H1 (cell line): ENCODE measurements at regions of chr3 and their contacts with region 1.

Region 1: DNA sequence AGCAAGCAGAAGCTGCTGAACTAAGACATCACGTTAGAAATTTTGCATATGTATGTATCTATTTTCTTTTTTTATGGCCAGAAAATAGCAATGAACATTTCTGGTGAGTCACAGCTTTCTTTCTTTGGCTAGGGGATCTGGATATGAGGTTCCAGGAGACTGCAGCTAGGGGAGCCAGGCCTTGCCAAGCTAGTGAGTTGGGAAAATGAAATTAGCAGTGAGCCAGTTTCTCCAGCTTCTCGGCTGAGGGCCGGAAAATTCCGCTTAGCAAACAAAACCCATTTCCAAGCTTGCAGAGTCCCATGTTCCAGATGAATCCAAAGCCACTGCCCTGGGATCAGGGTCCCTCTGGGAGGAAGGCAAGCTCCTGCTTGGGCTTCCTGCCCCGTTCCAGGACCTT is 137.6 kb downstream of the SRGAP3 start:
- DNase-seq: no peak
- H3K4me3 ChIP-seq: no peak overlapping the region
- H3K27ac ChIP-seq: no peak overlapping the region
- H3K4me1 ChIP-seq: peaks cover 0 to 2% (median 0%) of the 10 kb centered on the region in 4 experiments; a peak in 3 of 7 replicates
- H3K27me3 ChIP-seq: no peaks in the 10 kb centered on the region
- CTCF ChIP-seq: no peak
- EP300 ChIP-seq: no peak
- POLR2A ChIP-seq: no peak
- RAD21 ChIP-seq: no peak

Region 2: DNA sequence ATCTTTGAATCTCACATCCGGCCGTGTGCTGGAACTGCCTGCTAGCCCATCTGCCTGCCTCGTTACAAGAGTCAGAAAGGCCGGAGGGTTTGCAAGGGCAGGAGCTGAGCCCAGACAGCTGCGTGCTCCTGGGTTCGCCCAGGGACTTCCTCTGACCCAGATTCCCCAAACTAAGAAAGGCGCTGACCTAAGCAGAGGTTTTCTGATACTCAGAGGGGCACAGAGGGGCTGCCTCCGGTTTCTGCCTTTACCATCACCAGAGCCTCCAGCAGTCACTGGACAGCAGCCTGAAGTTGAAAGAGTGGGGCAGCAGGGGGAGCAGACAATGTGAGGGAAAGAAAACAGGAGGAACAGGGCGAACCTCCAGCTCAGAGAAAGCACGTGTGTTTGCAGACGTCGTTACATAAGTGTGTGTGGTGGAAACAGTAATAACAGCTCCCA is 115.2 kb before region 1 on chr3:
- CTCF ChIA-PET with region 1: interaction called, 13 read pairs
- POLR2A ChIA-PET with region 1: no interaction called
- DNase-seq: no peak
- H3K4me3 ChIP-seq: no peak overlapping the region
- H3K27ac ChIP-seq: no peak overlapping the region
- H3K4me1 ChIP-seq: peaks cover 0 to 5% (median 4%) of the 10 kb centered on the region in 4 experiments; a peak in 3 of 7 replicates
- H3K27me3 ChIP-seq: no peaks in the 10 kb centered on the region
- CTCF ChIP-seq: peak; percentile 44 to 57 (median 54)
- EP300 ChIP-seq: no peak
- POLR2A ChIP-seq: no peak
- RAD21 ChIP-seq: peak; percentile 35 to 61

Region 3: DNA sequence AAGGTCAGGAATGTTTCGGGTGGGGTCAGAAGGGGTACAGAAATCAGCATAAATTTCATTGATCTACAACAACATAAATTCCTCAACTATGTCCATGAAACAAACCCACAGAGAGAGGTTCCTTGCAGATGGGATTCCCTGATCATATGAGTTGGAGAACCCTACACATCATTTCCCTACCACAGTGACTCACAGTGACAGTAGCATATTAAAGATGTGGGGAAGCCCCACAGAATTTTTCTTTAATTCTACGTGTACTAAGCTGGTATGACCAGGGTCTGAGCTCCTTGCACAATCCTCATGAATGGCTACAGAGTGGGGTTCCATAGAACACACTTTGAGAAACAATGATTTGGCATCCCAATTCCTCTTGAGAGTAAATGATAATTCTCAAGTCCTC is 31.7 kb before region 1 on chr3:
- CTCF ChIA-PET with region 1: interaction called, 20 read pairs
- POLR2A ChIA-PET with region 1: no interaction called
- DNase-seq: no peak
- H3K4me3 ChIP-seq: no peak overlapping the region
- H3K27ac ChIP-seq: no peak overlapping the region
- H3K4me1 ChIP-seq: peaks cover 7 to 21% (median 17%) of the 10 kb centered on the region in 4 experiments
- H3K27me3 ChIP-seq: no peaks in the 10 kb centered on the region
- CTCF ChIP-seq: no peak
- EP300 ChIP-seq: no peak
- POLR2A ChIP-seq: no peak
- RAD21 ChIP-seq: no peak

Region 4: DNA sequence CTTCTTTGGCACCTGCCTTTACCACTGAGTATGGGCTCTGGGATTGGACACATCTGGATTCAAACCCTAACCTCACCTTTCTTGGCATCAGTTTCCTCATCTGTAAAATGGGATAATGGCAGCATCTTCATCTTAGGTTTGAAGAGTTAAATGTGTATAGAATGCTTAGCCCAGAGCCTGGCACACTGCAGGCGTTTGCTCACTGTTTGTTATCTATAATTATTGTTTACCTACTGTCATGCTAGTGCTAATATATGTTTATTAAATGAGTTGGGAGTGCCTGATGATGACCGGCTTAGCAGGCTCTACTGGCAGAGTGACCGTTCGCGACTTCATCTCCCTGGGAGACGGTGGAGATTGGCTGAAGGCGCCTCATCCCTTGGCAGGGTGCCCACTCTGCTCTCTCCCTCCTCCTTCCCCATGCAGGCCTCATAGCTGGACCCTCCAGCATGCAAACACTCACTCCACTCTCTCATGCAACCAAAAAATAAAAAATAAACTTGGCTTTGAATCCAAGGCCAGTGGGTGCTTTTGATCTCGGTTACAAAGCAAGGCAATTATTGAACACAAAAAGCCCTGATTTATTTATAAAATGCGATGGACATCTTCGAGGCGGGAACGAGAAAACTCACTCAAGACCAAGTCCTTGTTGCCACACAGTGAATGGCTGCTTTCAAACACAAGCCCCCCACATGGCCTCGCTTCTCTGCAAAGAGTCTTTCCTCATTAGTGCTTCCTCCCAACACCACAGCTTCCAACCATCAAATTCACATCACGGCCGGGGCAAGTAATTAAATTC is 13.1 kb before region 1 on chr3:
- CTCF ChIA-PET with region 1: interaction called, 39 read pairs
- POLR2A ChIA-PET with region 1: interaction called, 10 read pairs
- DNase-seq: no peak
- H3K4me3 ChIP-seq: no peak overlapping the region
- H3K27ac ChIP-seq: no peak overlapping the region
- H3K4me1 ChIP-seq: peaks cover 4 to 22% (median 18%) of the 10 kb centered on the region in 4 experiments; a peak in 5 of 7 replicates
- H3K27me3 ChIP-seq: no peaks in the 10 kb centered on the region
- CTCF ChIP-seq: no peak
- EP300 ChIP-seq: no peak
- POLR2A ChIP-seq: no peak
- RAD21 ChIP-seq: no peak

Region 5: GRCh38 chr3:9129365-9129764 is 17.5 kb after region 1 on chr3:
- CTCF ChIA-PET with region 1: interaction called, 79 read pairs
- POLR2A ChIA-PET with region 1: interaction called, 3 read pairs
- DNase-seq: no peak
- H3K4me3 ChIP-seq: no peak overlapping the region
- H3K27ac ChIP-seq: no peak overlapping the region
- H3K4me1 ChIP-seq: peaks cover 5 to 14% (median 7%) of the 10 kb centered on the region in 4 experiments; a peak in 5 of 7 replicates
- H3K27me3 ChIP-seq: no peaks in the 10 kb centered on the region
- CTCF ChIP-seq: no peak
- EP300 ChIP-seq: no peak
- POLR2A ChIP-seq: no peak
- RAD21 ChIP-seq: no peak

Region 6: GRCh38 chr3:9211155-9211950 is 99.5 kb after region 1 on chr3:
- CTCF ChIA-PET with region 1: interaction called, 13 read pairs
- POLR2A ChIA-PET with region 1: no interaction called
- DNase-seq: no peak
- H3K4me3 ChIP-seq: no peak overlapping the region
- H3K27ac ChIP-seq: no peak overlapping the region
- H3K4me1 ChIP-seq: no peaks in the 10 kb centered on the region
- H3K27me3 ChIP-seq: no peaks in the 10 kb centered on the region
- CTCF ChIP-seq: no peak
- EP300 ChIP-seq: no peak
- POLR2A ChIP-seq: no peak
- RAD21 ChIP-seq: no peak

Region 7: GRCh38 chr3:9291821-9292410 is 180.1 kb after region 1 on chr3:
- CTCF ChIA-PET with region 1: no interaction called
- POLR2A ChIA-PET with region 1: no interaction called
- DNase-seq: no peak
- H3K4me3 ChIP-seq: no peak overlapping the region
- H3K27ac ChIP-seq: no peak overlapping the region
- H3K4me1 ChIP-seq: no peaks in the 10 kb centered on the region
- H3K27me3 ChIP-seq: no peaks in the 10 kb centered on the region
- CTCF ChIP-seq: no peak
- EP300 ChIP-seq: no peak
- POLR2A ChIP-seq: no peak
- RAD21 ChIP-seq: no peak; a peak in 1 of 4 replicates

Region 8: GRCh38 chr3:9302425-9303181 is 190.7 kb after region 1 on chr3:
- CTCF ChIA-PET with region 1: interaction called, 31 read pairs
- POLR2A ChIA-PET with region 1: interaction called, 3 read pairs
- DNase-seq: peak; percentile 79 to 93
- H3K4me3 ChIP-seq: peak overlapping the region in 3 of 4 experiments; percentile 23 to 59 (median 38); a peak in 6 of 8 replicates
- H3K27ac ChIP-seq: no peak overlapping the region
- H3K4me1 ChIP-seq: peaks cover 0 to 5% (median 3%) of the 10 kb centered on the region in 4 experiments; a peak in 5 of 7 replicates
- H3K27me3 ChIP-seq: peaks cover 0 to 2% (median under 1%) of the 10 kb centered on the region in 4 experiments; a peak in 1 of 7 replicates
- CTCF ChIP-seq: peak; percentile 70 to 98 (median 80)
- EP300 ChIP-seq: peak in 1 of 2 experiments; percentile 51; a peak in 1 of 3 replicates
- POLR2A ChIP-seq: no peak
- RAD21 ChIP-seq: peak; percentile 97 to 99

Region 9: DNA sequence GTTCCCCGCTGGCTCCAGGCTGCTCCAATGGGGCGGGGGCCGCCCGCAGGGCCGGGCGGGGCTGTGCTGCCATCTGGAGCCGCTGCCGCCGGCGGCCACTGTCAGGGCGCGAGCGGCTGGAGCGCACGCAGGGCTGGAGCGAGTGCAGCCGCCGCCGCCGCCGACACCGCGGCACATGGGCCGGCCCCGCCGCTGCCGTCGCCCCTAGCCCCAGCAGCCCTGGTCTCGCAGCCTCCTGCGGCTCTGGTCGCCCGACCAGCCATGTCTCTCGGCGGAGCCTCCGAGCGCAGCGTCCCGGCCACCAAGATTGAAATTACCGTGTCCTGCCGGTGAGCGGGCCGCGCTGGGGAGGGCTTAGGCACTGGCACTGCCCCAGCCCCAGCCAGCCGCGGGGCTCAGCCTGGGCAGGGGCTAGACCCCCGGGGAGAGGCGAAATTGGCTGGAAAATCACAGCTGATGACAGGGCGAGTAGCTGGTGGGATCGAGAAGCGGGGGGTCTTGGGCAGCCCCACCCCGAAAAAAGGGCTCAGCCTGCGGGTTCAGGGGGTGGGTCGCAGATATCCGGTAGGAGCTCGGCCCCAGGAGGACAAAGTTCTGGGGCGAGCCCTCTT is 592.0 kb after region 1 on chr3 and contains the start of gene CPNE9:
- CTCF ChIA-PET with region 1: no interaction called
- POLR2A ChIA-PET with region 1: no interaction called
- DNase-seq: peak in 1 of 2 experiments; percentile 69
- H3K4me3 ChIP-seq: peak within 1 kb of the TSS; percentile 55 to 66 (median 60); a peak in 7 of 8 replicates
- H3K27ac ChIP-seq: no peak within 1 kb of the TSS
- H3K4me1 ChIP-seq: peaks cover 0 to 9% (median 5%) of the 10 kb centered on the region in 4 experiments; a peak in 5 of 7 replicates
- H3K27me3 ChIP-seq: peaks cover 0 to 23% (median 11%) of the 10 kb centered on the region in 4 experiments; a peak in 5 of 7 replicates
- CTCF ChIP-seq: no peak
- EP300 ChIP-seq: no peak
- POLR2A ChIP-seq: no peak
- RAD21 ChIP-seq: no peak
- total RNA-seq, gene CPNE9: 4.4 and 4.8 TPM in 2 replicates